ENCODE measurements at regions of chr9 and their contacts with region 1.

Region 1: GRCh38 chr9:109972026-109972882 is 192.3 kb downstream of the PALM2AKAP2 start:
- DNase-seq: peak; percentile 67 to 89 (median 80)
- H3K4me3 ChIP-seq: no peak overlapping the region
- H3K4me3 Mint-ChIP-seq: no peak overlapping the region
- H3K27ac ChIP-seq: peak overlapping the region in 1 of 2 donors; percentile 24
- H3K27ac Mint-ChIP-seq: peak overlapping the region in 5 of 7 donors; percentile 7 to 77 (median 39)
- H3K4me1 ChIP-seq: peaks cover 54 to 61% of the 10 kb centered on the region in 2 donors
- H3K4me1 Mint-ChIP-seq: peaks cover 64% of the 10 kb centered on the region
- H3K27me3 ChIP-seq: peaks cover 0 to 2% of the 10 kb centered on the region in 2 donors
- H3K27me3 Mint-ChIP-seq: peaks cover 0 to 5% (median 0%) of the 10 kb centered on the region in 3 donors
- CTCF ChIP-seq: peak; percentile 32

Region 2: GRCh38 chr9:110152704-110153374 is 180.6 kb after region 1 on chr9:
- intact Hi-C with region 1: loop called in 1 of 2 experiments (anchors 5 kb)
- DNase-seq: peak; percentile 18 to 60 (median 56)
- H3K4me3 ChIP-seq: no peak overlapping the region
- H3K4me3 Mint-ChIP-seq: no peak overlapping the region
- H3K27ac ChIP-seq: peak overlapping the region in 1 of 2 donors; percentile 26
- H3K27ac Mint-ChIP-seq: peak overlapping the region in 2 of 7 donors; percentile 82 to 85
- H3K4me1 ChIP-seq: peaks cover 49 to 52% of the 10 kb centered on the region in 2 donors
- H3K4me1 Mint-ChIP-seq: peaks cover 66% of the 10 kb centered on the region
- H3K27me3 ChIP-seq: no peaks in the 10 kb centered on the region
- H3K27me3 Mint-ChIP-seq: peaks cover 0 to 3% (median 1%) of the 10 kb centered on the region in 3 donors
- CTCF ChIP-seq: peak; percentile 92

Region 3: GRCh38 chr9:110241260-110241857 is 269.1 kb after region 1 on chr9:
- intact Hi-C with region 1: no loop called
- DNase-seq: no peak
- H3K4me3 ChIP-seq: no peak overlapping the region
- H3K4me3 Mint-ChIP-seq: no peak overlapping the region
- H3K27ac ChIP-seq: no peak overlapping the region
- H3K27ac Mint-ChIP-seq: no peak overlapping the region
- H3K4me1 ChIP-seq: peaks cover 3 to 8% of the 10 kb centered on the region in 2 donors
- H3K4me1 Mint-ChIP-seq: peaks cover 9% of the 10 kb centered on the region
- H3K27me3 ChIP-seq: no peaks in the 10 kb centered on the region
- H3K27me3 Mint-ChIP-seq: no peaks in the 10 kb centered on the region
- CTCF ChIP-seq: no peak

Measured in CD14-positive monocyte (primary cell).